GM10248 (cell line): ENCODE measurements at regions of chr7 and their contacts with region 1.

Region 1: DNA sequence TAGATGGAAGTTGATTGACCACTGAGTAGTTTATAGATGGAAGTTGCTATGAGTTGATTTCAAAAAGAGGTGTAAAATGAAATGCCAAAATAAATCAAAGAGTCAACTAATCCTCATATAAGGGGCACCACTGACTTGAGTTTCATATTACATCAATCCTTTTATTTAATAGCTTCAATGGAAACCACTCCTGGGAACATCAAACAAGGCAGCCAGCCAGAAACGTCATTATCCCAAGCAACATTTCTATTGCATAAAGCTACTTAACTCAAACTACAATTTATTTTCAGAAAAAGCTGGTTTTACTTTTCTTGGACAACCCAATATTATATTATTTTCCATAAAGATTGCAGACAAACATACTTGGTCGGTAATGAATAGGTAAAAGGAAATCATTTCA is 162.1 kb downstream of the TSPAN12 start:
- DNase-seq: no peak
- CTCF ChIP-seq: no peak

Region 2: DNA sequence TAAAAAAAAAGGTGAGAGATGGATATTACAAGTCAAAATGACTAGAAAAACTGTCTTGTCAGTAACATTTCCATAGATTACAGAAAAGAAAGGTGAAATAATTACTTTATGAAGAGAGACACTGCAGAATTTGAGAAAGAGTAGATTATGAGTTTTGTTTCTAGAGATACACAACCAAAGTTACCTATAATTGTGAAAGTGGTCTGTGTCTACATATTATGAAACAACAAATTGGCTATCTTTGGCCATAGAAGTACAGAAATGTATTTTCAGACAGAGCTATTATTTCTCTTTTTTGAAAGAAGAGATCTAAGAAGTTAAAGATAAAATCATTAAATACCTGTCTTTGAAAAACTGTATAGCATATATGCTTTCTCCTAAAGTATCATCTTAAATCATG is 392.7 kb before region 1 on chr7:
- CTCF ChIA-PET with region 1: no interaction called
- POLR2A ChIA-PET with region 1: no interaction called
- DNase-seq: no peak
- CTCF ChIP-seq: no peak

Region 3: DNA sequence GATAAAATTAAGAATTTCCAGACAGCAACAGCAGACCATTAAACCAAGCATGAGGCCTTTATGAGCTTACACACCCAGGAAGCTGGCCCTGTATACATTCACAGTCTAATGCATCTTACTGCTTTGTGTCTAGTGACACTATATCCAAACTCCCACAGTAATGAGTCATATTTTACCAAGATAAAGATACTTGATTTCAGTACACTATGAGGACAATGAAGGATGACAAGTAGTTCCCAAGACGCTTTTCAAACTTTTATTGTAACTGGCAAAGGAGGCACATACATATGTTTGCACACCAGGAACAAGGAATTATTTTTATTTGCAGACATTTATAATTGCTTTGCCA is 14.1 kb after region 1 on chr7:
- CTCF ChIA-PET with region 1: interaction called, 11 read pairs
- POLR2A ChIA-PET with region 1: no interaction called
- DNase-seq: no peak
- CTCF ChIP-seq: no peak

Region 4: DNA sequence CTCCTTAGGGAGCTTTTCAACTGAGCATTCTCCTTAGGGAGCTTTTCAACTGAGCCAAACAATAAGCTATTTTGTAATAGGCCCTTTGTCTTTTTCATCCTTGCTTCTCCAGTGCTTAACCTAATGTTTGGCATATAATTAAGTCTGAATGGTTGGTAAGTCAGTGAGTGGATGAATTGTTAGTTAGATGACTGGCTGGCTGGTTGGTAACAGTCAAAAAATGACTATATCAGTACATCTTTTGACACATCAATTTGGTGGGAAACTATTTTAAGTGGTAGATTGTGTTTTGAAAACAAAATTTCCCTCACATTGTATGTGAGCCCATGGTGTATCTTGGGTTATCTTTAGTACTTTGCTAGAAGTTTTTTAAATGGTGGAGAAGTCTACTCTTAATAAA is 271.1 kb after region 1 on chr7:
- CTCF ChIA-PET with region 1: no interaction called
- POLR2A ChIA-PET with region 1: no interaction called
- DNase-seq: no peak
- CTCF ChIP-seq: no peak